Activated T-helper 2 cell treated with anti-CD3 and anti-CD28 coated beads, Interferon-gamma antibody, Interleukin-2, Interleukin-4, amounts not matched to agents 10 μg/mL and 5 μg/mL and 100 μg/mL, durations not matched to agents 14 hours and 24 hours and 36 hours (primary cell): ENCODE measurements at regions of chr12 and their contacts with region 1.

Region 1: GRCh38 chr12:8493084-8493483 is 20.2 kb upstream of the CLEC4D start:
- DNase-seq: peak; percentile 26
- H3K4me3 Mint-ChIP-seq: no peak overlapping the region
- H3K27ac Mint-ChIP-seq: peak overlapping the region; percentile 36
- H3K4me1 Mint-ChIP-seq: peaks cover 22% of the 10 kb centered on the region
- H3K27me3 Mint-ChIP-seq: peaks cover 64% of the 10 kb centered on the region

Region 2: DNA sequence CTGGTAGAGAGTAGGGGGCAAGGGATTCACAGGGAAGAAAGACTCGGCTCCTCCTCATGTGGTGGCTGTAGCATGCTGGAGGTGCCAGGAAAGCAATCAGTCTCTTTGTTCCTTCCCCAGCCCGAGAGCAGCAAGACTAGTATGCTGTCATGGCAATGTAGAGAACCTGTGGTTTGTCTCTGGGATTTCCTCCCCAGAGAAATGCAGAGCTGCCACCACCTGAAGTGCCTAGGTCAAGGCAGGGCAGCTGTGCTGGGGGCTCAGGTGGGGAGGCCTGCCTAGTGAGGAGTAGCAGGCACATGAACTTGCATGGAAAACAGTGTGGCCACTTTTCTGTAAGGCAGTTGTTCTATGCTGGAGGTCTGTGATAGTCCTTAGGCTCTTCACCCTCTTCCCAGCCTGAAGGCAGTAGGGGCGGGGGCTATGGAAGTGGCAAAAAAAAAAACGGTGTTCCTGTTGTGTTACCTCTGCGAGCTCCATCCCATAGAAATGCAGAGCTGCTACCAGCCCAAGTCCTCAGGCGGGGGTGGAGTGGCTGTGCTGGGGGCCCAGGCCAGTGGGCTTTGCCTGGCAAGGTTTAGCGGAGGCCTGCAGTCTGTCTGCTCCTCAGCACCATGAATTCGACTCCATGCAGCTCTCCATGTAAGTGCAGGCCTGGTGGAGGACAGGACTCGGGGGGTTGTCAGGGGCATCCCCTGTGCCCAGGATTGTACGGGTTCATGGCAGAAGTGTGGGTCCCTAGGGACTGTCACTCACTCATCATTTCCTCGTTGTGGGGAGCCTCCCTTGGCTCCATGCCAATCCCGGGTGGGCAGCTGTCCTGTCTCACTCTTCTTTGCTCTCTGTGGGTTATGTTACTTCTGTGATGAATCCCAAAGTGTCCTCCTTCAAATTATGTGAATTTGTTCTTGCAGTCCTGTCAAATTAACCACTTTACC is 16.1 kb after region 1 on chr12:
- intact Hi-C with region 1: no loop called
- DNase-seq: no peak
- H3K4me3 Mint-ChIP-seq: no peak overlapping the region
- H3K27ac Mint-ChIP-seq: no peak overlapping the region
- H3K4me1 Mint-ChIP-seq: no peaks in the 10 kb centered on the region
- H3K27me3 Mint-ChIP-seq: peaks cover 38% of the 10 kb centered on the region

Region 3: GRCh38 chr12:8554451-8555195 is 61.5 kb after region 1 on chr12:
- intact Hi-C with region 1: no loop called
- DNase-seq: no peak
- H3K4me3 Mint-ChIP-seq: no peak overlapping the region
- H3K27ac Mint-ChIP-seq: no peak overlapping the region
- H3K4me1 Mint-ChIP-seq: no peaks in the 10 kb centered on the region
- H3K27me3 Mint-ChIP-seq: peaks cover 3% of the 10 kb centered on the region

Region 4: GRCh38 chr12:8644345-8645248 is 151.5 kb after region 1 on chr12:
- intact Hi-C with region 1: loop called (anchors 5 kb)
- DNase-seq: peak; percentile 46
- H3K4me3 Mint-ChIP-seq: peak overlapping the region; percentile 31
- H3K27ac Mint-ChIP-seq: peak overlapping the region; percentile 34
- H3K4me1 Mint-ChIP-seq: peaks cover 35% of the 10 kb centered on the region
- H3K27me3 Mint-ChIP-seq: peaks cover 41% of the 10 kb centered on the region